Calu3 (cell line): ENCODE measurements at regions of chr6 and their contacts with region 1.

Region 1: GRCh38 chr6:46993846-46994245 is 48.3 kb downstream of the ADGRF1 start:
- DNase-seq: peak; percentile 37
- H3K4me3 Mint-ChIP-seq: no peak overlapping the region
- H3K27ac Mint-ChIP-seq: peak overlapping the region; percentile 2
- H3K4me1 Mint-ChIP-seq: peaks cover 79% of the 10 kb centered on the region
- H3K27me3 Mint-ChIP-seq: no peaks in the 10 kb centered on the region
- CTCF ChIP-seq: no peak

Region 2: GRCh38 chr6:46704562-46704961 is 289.3 kb before region 1 on chr6:
- CTCF ChIA-PET with region 1: no interaction called
- intact Hi-C with region 1: loop called (anchors 2 kb)
- DNase-seq: peak; percentile 19
- H3K4me3 Mint-ChIP-seq: no peak overlapping the region
- H3K27ac Mint-ChIP-seq: no peak overlapping the region
- H3K4me1 Mint-ChIP-seq: no peaks in the 10 kb centered on the region
- H3K27me3 Mint-ChIP-seq: no peaks in the 10 kb centered on the region
- CTCF ChIP-seq: peak; percentile 34

Region 3: DNA sequence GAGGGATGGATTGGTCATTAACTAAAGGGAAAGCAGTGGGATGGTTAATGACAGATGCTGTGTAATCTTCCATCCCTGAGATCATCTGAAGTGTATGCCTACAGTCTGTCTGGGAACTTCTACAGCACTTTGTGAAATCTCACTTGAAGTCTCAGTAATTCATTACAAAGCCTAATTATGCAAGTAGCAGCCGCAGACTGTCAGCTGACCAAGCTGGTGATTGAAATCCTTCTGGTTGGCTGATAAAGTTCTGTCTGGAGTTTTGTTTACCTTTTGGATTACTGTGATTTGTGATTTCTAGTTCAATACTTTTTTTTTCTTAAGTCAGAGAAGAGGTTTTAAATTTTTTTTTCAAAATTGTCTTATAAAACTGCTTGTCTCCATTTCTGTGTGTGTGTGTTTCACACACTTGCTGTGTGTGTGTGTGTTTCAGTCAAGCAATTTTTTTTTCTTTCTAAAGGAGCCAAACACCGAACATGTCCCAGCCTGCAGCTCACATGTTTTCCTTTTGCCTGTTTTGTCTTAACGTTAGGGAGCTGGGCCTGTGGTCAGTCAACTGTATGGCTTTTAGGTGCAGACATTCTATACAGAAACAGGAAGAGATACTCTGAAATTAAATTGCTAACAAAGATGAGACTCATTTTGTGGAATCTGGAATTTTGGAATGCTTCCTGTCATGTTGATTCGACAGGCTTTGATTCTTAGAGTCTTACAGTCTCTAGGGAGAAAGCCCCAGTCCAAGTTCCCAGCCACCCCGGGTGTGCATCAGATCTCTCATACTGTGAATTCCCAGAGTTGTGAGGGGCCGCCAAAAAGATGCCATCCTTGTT is 676.1 kb after region 1 on chr6:
- CTCF ChIA-PET with region 1: no interaction called
- intact Hi-C with region 1: no loop called
- DNase-seq: no peak
- H3K4me3 Mint-ChIP-seq: peak overlapping the region; percentile 22
- H3K27ac Mint-ChIP-seq: peak overlapping the region; percentile 62
- H3K4me1 Mint-ChIP-seq: peaks cover 30% of the 10 kb centered on the region
- H3K27me3 Mint-ChIP-seq: no peaks in the 10 kb centered on the region
- CTCF ChIP-seq: no peak